Heart right ventricle (tissue), 16 donors: ENCODE measurements at regions of chr12 and their contacts with region 1.

Region 1: GRCh38 chr12:15700595-15700994 is 88.6 kb downstream of the EPS8 start:
- DNase-seq: peak in 1 of 2 donors; percentile 25
- ATAC-seq: peak; percentile 53 to 92 (median 80)
- H3K4me3 ChIP-seq: no peak overlapping the region
- H3K27ac ChIP-seq: peak overlapping the region; percentile 2 to 83 (median 72)
- H3K4me1 ChIP-seq: peaks cover 0 to 84% (median 57%) of the 10 kb centered on the region in 9 donors
- H3K27me3 ChIP-seq: no peaks in the 10 kb centered on the region
- CTCF ChIP-seq: no peak

Region 2: DNA sequence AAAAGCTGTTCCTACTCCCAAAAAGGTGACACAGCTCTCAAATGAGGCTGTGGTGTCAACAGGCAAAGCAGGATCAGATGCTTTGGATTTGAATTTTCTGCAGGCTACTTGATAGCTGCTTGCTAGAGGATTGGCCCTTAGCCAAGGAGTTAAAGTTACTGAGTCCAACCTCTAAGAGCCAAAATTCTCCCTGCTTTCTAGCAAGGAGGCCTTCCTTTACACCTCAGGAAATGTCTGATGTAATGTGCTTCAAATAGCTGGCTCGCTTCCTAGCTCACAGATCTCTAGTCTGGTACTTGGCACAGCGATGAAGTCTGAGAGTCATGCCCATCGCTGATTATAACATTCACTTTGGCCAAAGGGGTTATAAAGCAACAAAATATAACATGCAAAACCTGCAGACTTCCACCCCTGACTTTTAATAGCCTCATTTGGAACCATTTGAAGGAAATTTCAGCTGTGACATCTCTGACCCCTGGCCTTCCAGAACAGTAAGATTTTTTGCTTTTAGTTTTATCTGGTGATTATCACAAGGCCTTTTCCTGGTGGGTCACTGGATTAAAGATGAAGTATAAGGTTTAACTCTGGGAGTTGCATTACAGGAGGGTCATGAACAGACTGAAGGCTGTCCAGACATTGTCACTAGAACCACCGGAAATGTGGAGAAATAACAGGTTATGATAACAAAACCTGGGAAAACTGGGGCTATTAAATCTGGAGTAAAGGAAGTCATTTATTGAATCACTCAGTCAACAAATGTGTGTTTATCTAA is 101.1 kb before region 1 on chr12:
- intact Hi-C with region 1: loop called in 1 of 10 experiments (anchors 5 kb)
- DNase-seq: peak in 1 of 2 donors; percentile 70
- ATAC-seq: peak; percentile 85 to 94 (median 90)
- H3K4me3 ChIP-seq: no peak overlapping the region
- H3K27ac ChIP-seq: peak overlapping the region in 8 of 10 donors; percentile 5 to 53 (median 45)
- H3K4me1 ChIP-seq: peaks cover 0 to 53% (median 38%) of the 10 kb centered on the region in 9 donors
- H3K27me3 ChIP-seq: no peaks in the 10 kb centered on the region
- CTCF ChIP-seq: no peak